ENCODE measurements at regions of chr11 and their contacts with region 1.

Region 1: GRCh38 chr11:128776424-128777284 is 82.8 kb downstream of the FLI1 start:
- DNase-seq: no peak
- ATAC-seq: no peak
- H3K4me3 Mint-ChIP-seq: no peak overlapping the region
- H3K27ac Mint-ChIP-seq: peak overlapping the region; percentile 56
- H3K4me1 Mint-ChIP-seq: peaks cover 42% of the 10 kb centered on the region
- H3K27me3 Mint-ChIP-seq: no peaks in the 10 kb centered on the region
- CTCF ChIP-seq: no peak

Region 2: DNA sequence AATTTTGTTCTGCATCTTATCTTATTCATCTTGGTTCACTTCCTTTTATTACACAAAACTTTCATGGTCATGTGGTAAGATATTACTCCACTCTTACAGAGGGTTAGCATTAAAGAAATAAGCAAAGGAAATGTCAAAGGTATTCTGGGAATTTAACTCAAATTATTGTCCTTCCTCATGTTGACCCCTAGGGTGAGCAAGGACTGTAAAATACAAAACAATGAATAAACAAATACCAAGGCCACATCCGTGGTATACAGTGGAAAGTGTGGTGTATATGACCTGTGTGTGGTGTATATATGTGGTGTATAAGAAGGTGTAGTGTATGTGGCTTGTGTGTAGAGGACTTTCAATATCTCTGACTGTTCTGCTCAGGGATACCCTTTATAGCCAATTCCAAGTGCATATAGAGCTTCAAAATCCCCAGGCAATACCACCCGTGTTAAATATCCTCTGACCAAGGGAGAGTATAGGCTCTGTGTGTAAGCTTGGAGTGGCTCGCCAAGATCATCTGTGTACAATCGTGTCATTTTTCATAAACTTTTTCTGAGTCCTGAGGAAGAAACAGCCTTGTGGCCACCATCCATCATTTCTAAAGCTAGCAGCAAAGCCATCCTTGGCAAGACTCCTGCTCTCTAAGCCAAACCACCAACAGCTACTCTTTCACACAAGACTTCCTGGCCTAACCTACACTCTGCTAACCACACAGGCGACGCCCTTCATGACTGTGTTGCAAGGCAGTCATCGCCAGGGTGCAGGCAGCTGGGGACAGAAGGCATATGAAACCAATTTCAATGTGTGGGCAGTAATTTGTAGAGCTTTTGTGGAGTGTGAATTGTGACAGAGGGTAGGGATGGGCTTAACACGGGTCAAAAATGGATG is 737.3 kb before region 1 on chr11:
- CTCF ChIA-PET with region 1: no interaction called
- POLR2A ChIA-PET with region 1: no interaction called
- intact Hi-C with region 1: loop called (anchors 5 kb)
- DNase-seq: no peak
- ATAC-seq: peak; percentile 75
- H3K4me3 Mint-ChIP-seq: no peak overlapping the region
- H3K27ac Mint-ChIP-seq: no peak overlapping the region
- H3K4me1 Mint-ChIP-seq: peaks cover 12% of the 10 kb centered on the region
- H3K27me3 Mint-ChIP-seq: peaks cover 20% of the 10 kb centered on the region
- CTCF ChIP-seq: no peak

Region 3: DNA sequence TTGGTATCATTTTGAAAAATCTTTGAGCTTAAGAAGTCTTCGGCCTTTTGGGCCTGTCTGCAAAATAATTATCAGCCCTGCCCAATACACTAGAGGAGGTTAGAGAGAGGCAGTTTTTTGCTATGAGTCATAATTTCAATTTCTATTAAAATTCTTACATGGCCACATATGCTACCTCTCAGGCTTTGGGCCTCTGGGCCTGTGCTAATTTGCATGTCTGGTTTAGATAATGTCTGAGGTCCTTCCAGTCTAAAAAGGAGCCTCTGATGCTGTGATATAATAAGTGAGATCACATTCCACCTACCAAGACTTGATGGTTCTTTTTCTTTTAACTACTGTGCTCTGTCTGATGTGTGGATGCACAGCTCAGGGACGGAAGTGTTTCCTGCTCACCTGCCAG is 19.6 kb after region 1 on chr11:
- CTCF ChIA-PET with region 1: interaction called, 3 read pairs
- POLR2A ChIA-PET with region 1: no interaction called
- intact Hi-C with region 1: loop called (anchors 2 kb)
- DNase-seq: no peak
- ATAC-seq: peak; percentile 89
- H3K4me3 Mint-ChIP-seq: peak overlapping the region; percentile 24
- H3K27ac Mint-ChIP-seq: peak overlapping the region; percentile 64
- H3K4me1 Mint-ChIP-seq: peaks cover 37% of the 10 kb centered on the region
- H3K27me3 Mint-ChIP-seq: no peaks in the 10 kb centered on the region
- CTCF ChIP-seq: no peak

Measured in activated B cell treated with CpG ODN at 0.5 μM for 24 hours (primary cell).